PC-3 (cell line): ENCODE measurements at regions of chr13 and their contacts with region 1.

Region 1: GRCh38 chr13:94710881-94711560 is 1.3 kb downstream of the SOX21 start:
- DNase-seq: peak; percentile 59
- ATAC-seq: peak; percentile 29
- H3K4me3 ChIP-seq: peak overlapping the region; percentile 98
- H3K27ac ChIP-seq: peak overlapping the region; percentile 79
- H3K4me1 ChIP-seq: 0 out of 2 replicates have a peak, but pooled peaks cover 18% of the 10 kb centered on the region
- H3K27me3 ChIP-seq: no peaks in the 10 kb centered on the region
- CTCF ChIP-seq: peak; percentile 28; the same call in 1 of the 2 replicates

Region 2: DNA sequence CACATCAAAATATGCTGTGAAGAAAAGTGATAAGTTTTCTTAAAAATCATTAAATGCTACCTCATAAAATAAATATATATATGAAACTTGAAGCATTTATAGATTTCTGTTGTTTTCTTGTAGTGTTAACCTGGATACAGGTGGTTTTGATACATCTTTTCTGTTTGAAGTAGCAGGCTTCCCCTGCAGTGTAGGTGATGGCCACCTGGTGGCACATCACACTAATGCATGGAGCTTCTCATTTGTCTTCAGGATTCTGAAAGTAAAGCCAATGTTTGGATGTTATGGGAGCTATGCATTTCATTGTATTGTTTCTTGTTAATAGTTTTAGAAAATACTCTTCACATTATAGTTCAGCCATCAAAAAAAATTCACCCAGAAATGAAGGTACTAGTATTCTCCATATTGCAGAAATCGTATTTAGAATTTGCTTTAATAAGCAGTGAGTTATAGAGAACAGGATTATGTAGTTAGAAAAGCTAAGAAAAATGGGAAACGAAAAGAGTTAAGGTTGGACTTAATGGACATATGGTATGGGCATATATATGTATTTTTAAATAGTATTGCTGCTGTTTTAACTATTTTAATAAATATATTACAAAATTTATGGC is 90.6 kb before region 1 on chr13:
- CTCF ChIA-PET with region 1: no interaction called
- POLR2A ChIA-PET with region 1: no interaction called
- intact Hi-C with region 1: loop called (anchors 2 kb)
- DNase-seq: peak; percentile 61
- ATAC-seq: peak; percentile 67
- H3K4me3 ChIP-seq: no peak overlapping the region
- H3K27ac ChIP-seq: no peak overlapping the region
- H3K4me1 ChIP-seq: no peaks in the 10 kb centered on the region
- H3K27me3 ChIP-seq: no peaks in the 10 kb centered on the region
- CTCF ChIP-seq: peak; percentile 83

Region 3: DNA sequence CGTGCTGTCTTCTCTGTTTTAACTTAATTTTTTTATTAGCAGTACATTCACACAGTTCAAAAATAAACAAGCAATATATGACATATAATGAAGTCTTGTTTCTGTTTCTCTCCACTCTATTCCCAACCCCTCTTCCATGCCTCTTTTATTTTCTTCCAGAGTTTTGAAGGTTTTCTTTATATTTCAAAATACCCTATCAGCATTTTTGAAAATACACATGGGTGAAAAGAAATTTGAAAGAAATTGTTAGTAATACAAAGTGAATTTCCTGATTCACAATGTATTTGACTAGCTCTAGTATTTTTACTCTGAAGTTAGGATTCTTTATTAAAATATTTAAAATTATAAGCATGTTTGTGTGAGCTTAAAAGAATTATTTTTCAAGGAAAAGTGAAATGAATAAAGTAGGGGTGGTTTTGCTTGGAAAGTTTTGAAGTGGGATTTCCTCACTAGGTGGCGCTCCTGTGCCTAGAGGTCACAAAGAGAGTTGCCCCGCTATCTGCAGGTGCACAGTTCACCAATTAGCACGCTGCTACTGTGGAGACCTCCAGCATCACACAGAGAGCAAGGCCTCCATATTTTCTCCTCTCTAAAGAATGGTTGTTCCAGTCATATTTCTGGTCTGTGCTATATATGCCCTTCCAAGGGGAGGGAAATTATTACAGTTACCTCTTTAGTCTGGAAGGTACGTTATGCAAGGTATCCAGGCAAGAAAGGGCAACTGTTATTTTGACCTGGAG is 36.2 kb before region 1 on chr13:
- CTCF ChIA-PET with region 1: interaction called, 3 read pairs
- POLR2A ChIA-PET with region 1: no interaction called
- intact Hi-C with region 1: loop called (anchors 2 kb)
- DNase-seq: peak; percentile 72
- ATAC-seq: peak; percentile 56
- H3K4me3 ChIP-seq: no peak overlapping the region
- H3K27ac ChIP-seq: no peak overlapping the region
- H3K4me1 ChIP-seq: peaks cover 10% of the 10 kb centered on the region
- H3K27me3 ChIP-seq: no peaks in the 10 kb centered on the region
- CTCF ChIP-seq: peak; percentile 75

Region 4: DNA sequence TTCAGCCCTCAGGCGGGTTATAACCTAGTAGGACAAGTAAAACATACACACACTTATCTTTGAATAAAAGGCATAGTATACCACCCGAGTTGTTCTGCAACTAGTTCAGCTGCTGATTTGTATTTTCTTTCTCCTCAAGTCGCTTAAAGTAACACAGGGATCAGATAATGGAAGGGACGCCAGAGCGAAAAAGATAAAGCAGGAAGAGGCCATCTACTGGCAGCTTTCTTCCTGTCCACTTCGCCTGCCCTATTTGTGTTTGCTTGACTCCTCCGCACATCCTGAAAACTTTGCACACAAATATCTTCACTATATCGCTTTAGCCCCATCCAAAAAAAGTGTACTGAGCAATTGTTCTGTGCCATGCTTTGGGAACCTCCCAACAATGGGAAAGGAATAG is 239.3 kb after region 1 on chr13:
- CTCF ChIA-PET with region 1: no interaction called
- POLR2A ChIA-PET with region 1: no interaction called
- intact Hi-C with region 1: loop called (anchors 2 kb)
- DNase-seq: no peak
- ATAC-seq: peak; percentile 55; the same call in 1 of the 2 replicates
- H3K4me3 ChIP-seq: no peak overlapping the region
- H3K27ac ChIP-seq: no peak overlapping the region
- H3K4me1 ChIP-seq: no peaks in the 10 kb centered on the region
- H3K27me3 ChIP-seq: no peaks in the 10 kb centered on the region
- CTCF ChIP-seq: peak; percentile 33; the same call in 1 of the 2 replicates

Region 5: GRCh38 chr13:95023405-95023804 is 312.4 kb after region 1 on chr13:
- CTCF ChIA-PET with region 1: interaction called, 3 read pairs
- POLR2A ChIA-PET with region 1: no interaction called
- intact Hi-C with region 1: loop called (anchors 10 kb)
- DNase-seq: peak; percentile 77
- ATAC-seq: peak; percentile 46
- H3K4me3 ChIP-seq: no peak overlapping the region
- H3K27ac ChIP-seq: peak overlapping the region; percentile 99
- H3K4me1 ChIP-seq: peaks cover 48% of the 10 kb centered on the region
- H3K27me3 ChIP-seq: no peaks in the 10 kb centered on the region
- CTCF ChIP-seq: no peak

Region 6: DNA sequence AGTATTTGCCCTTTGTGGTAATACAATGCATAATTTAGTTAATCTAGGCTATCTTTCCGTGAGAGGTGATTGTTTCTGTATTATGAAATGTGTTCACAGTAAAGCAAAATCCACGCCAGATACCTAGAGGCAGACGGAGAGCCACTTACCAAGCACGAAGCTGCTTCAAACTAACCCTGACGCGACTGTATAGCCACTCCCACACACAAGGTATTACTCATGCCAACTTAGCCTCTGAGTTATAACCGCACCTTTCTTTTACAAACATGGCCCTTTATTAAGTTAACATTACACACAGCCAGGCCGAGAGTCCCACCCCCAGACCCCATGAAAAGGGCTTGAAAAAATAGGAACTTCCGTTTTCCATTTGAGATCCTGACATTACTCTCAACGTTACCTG is 404.5 kb after region 1 on chr13:
- CTCF ChIA-PET with region 1: no interaction called
- POLR2A ChIA-PET with region 1: no interaction called
- intact Hi-C with region 1: loop called (anchors 5 kb)
- DNase-seq: peak; percentile 93
- ATAC-seq: peak; percentile 91
- H3K4me3 ChIP-seq: peak overlapping the region; percentile 34
- H3K27ac ChIP-seq: peak overlapping the region; percentile 100
- H3K4me1 ChIP-seq: peaks cover 71% of the 10 kb centered on the region
- H3K27me3 ChIP-seq: no peaks in the 10 kb centered on the region
- CTCF ChIP-seq: no peak